BJ (cell line): ENCODE measurements at regions of chr5 and their contacts with region 1.

Region 1: DNA sequence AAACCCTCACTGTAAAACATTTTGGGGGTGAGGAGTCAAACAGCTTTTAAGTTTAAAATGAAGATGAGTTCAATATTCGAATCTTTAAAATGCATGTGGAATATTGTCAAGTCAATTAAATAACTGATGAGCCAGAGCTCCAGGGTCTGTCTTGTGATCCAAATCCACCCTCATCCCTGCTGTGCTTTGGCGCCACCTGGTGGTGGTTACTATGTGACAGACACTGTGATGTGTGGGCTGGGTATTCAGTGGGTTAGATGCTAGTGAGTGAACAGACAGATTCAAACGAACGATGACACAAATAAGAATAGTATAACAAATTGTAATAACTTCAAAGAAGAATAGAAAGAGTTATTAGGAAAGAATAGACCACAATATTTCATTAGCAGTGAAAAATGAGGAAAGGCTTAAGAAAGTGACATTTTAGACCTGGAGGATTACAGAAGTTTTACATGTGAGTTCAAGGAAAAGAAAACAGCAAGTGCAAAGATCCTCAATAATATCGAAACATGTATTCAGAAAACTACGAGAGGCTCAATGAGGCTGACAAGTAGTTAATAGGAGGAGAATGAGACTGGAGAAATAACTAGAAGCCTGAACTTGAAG is 51.4 kb upstream of the CHSY3 start:
- DNase-seq: peak; percentile 5
- H3K4me3 ChIP-seq: no peak overlapping the region
- H3K27me3 ChIP-seq: no peaks in the 10 kb centered on the region
- CTCF ChIP-seq: peak; percentile 96

Region 2: DNA sequence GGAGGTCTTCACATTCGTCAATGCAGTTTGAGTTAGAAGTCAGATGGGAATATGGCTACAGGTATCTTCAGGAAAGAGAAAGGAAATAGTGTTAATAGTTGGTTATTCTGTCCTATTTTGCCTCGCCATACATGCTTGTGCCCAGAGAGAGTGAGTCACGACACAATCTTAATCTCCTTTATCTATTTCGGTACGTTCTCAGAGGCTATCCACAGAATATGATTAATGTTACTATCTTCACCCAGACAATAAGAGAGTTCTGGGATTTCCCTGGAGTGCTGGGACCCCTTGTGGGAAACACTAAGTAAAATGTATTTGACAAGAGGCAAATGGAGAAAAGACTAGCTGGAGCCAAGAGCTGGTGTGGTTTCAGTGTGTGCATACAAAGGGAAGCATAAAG is 79.5 kb before region 1 on chr5:
- CTCF ChIA-PET with region 1: interaction called, 31 read pairs
- POLR2A ChIA-PET with region 1: no interaction called
- DNase-seq: no peak
- H3K4me3 ChIP-seq: no peak overlapping the region
- H3K27me3 ChIP-seq: no peaks in the 10 kb centered on the region
- CTCF ChIP-seq: no peak